Activated naive CD8-positive, alpha-beta T cell treated with anti-CD3 and anti-CD28 coated beads, Interleukin-2, amount 10 ng/mL, durations not matched to agents 7 days and 5 days (primary cell): ENCODE measurements at regions of chr19 and their contacts with region 1.

Region 1: GRCh38 chr19:15555759-15556633 is 47.7 kb downstream of the CYP4F22 start:
- DNase-seq: peak; percentile 99
- ATAC-seq: peak; percentile 84
- H3K4me3 Mint-ChIP-seq: peak overlapping the region; percentile 92
- H3K27ac Mint-ChIP-seq: peak overlapping the region; percentile 86
- H3K4me1 Mint-ChIP-seq: peaks cover 18% of the 10 kb centered on the region
- H3K27me3 Mint-ChIP-seq: peaks cover 3% of the 10 kb centered on the region

Region 2: DNA sequence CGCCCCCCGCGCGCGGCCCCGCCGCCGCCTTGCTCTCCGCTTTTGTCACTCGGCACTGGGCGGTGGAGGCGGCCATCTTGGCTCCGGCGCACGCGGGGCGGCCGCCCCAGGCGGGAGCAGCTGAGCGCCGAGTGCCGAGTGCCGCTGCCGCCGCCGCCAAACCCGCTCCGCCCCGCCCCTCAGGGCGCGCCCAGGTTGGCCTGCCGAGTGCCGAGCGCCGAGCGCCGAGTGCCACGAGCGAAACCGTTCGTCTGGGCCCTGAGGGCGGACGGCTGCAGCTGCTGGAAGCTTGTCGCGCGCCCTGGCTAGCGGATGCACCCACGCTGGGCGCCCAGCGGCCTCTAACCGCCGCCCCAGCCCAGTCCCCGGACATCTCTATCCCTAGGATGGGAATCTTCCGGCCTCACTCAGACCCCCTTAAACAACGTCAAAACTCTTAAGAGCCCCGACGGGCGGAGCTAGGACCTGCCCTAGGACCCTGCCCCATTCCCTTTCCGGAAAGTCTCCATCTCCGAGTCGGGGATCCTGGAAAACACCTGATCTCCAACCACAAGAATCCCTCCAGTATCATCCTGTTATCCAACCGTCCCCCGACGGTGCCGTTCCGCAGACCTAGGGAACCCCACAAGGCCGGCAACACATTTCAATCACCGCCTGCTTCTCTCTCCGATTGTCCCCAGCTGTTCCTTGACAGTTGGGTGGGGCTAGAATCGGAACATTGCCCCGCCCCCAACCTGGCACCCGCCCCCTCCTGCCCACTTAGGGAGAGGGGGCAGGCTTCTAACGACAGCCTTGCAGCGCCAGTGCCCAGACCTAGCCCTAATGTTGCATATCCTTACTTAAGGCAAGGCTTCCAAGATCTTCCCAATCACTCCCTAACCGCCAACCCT is 123.1 kb before region 1 on chr19:
- POLR2A ChIA-PET with region 1: interaction called, 13 read pairs
- DNase-seq: peak; percentile 98
- ATAC-seq: peak; percentile 76
- H3K4me3 Mint-ChIP-seq: peak overlapping the region; percentile 93
- H3K27ac Mint-ChIP-seq: peak overlapping the region; percentile 96
- H3K4me1 Mint-ChIP-seq: peaks cover 22% of the 10 kb centered on the region
- H3K27me3 Mint-ChIP-seq: no peaks in the 10 kb centered on the region

Region 3: GRCh38 chr19:15498911-15499317 is 57.1 kb before region 1 on chr19:
- POLR2A ChIA-PET with region 1: no interaction called
- DNase-seq: no peak
- ATAC-seq: no peak
- H3K4me3 Mint-ChIP-seq: no peak overlapping the region
- H3K27ac Mint-ChIP-seq: no peak overlapping the region
- H3K4me1 Mint-ChIP-seq: peaks cover 2% of the 10 kb centered on the region
- H3K27me3 Mint-ChIP-seq: peaks cover 3% of the 10 kb centered on the region

Region 4: DNA sequence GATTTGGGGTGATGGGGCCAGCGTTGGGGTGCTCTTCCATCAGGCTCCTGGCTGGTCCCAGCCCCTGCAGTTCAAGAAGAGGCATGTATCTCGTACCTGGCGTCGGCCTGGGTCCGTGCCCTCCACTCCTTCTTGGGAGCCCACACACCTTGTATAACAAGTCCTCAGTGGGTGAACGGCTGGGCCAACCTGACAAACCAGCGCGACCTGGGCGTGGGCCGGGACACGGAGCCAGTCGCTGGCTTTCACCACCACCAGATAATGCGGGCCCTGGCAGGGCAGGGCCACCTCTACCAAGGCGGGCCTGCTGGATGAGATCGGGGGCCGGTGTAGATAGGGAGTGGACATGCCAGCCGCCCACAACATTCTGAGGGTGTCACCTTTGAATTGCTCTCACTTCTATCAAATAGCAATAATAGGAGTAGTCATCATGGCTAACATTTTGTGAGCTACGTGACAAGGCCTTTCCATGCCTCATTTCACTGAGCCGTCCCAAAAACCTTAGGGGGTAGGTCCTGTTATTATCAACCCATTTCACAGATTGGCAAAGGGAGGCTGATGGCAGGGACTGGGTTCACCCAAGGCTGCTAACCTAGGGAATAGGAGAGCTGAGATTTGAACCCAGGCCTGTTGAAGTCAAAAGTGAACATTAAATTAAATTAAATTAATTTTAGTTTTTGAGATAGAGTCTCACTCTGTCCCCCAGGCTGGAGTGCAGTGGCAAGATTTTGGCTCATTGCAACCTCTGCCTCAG is 44.1 kb before region 1 on chr19:
- POLR2A ChIA-PET with region 1: interaction called, 12 read pairs
- DNase-seq: no peak
- ATAC-seq: no peak
- H3K4me3 Mint-ChIP-seq: no peak overlapping the region
- H3K27ac Mint-ChIP-seq: no peak overlapping the region
- H3K4me1 Mint-ChIP-seq: peaks cover 32% of the 10 kb centered on the region
- H3K27me3 Mint-ChIP-seq: peaks cover 23% of the 10 kb centered on the region